GM10248 (cell line): ENCODE measurements at regions of chr3 and their contacts with region 1.

Region 1: DNA sequence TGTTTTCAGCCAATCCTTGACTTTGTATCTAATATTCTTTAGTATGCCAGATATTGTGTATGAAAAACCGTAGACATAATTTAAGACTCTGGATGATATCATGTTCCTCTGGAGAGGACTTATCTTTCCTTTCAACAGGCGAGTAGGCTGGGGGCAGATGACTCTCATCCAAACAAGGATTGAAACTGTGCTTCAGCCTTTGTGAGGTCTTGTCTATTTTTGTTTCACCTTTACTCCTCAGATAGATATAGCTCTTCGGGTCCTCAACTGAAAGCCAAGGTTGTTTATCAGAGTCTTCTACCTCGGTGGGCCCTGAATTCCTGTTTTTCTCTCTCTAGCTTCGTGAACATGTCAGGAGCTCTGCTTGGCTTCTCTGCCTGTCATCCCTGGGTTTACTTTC is 66.0 kb downstream of the C3orf20 start:
- DNase-seq: no peak
- CTCF ChIP-seq: no peak

Region 2: DNA sequence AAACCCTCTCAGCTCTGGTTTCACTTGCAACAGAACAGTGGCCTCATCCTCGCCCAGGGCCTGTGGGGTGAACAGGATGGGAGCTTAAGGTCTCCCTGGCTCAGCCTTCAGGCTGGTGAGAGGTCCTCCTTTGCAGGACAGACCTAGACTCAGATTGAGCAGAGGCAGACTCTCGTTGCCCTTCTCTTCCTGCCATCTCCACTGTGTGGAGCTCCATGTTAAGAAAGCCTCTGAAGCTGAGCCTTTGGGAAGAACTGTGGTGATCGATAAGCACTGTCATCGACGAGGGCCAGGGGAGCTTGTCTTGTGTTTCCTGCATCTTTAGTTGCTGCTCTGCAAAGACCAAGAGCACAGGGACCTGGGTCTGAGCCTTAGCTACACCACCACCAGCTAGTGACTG is 163.1 kb before region 1 on chr3:
- CTCF ChIA-PET with region 1: no interaction called
- POLR2A ChIA-PET with region 1: no interaction called
- DNase-seq: no peak
- CTCF ChIP-seq: no peak

Region 3: DNA sequence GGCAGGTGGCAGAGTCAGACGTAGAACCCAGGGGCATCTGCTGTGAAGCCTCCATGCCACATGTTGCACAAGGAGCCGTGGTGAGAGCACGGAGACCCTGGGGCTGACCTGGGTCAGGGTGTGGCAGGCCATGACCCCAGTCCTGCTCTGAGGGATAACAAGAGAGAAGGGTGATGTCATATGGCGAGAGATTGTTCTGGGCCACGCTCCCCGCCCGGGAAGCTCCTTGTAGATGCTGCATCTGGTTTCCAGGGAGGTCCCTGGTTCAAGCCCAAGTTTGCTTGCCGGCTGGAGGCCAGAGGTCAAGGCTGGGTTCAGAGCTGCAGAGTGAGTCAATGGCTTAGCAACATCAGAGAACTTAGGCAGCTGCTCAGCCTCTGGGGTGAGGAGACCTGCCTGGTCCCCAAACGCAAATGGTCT is 95.1 kb after region 1 on chr3:
- CTCF ChIA-PET with region 1: no interaction called
- POLR2A ChIA-PET with region 1: interaction called, 15 read pairs
- DNase-seq: no peak
- CTCF ChIP-seq: no peak